Adrenal gland (tissue), 19 donors: ENCODE measurements at regions of chrX and their contacts with region 1.

Region 1: GRCh38 chrX:101617211-101618191 is at the start of gene ARMCX6:
- DNase-seq: peak; percentile 65 to 91 (median 77)
- H3K4me3 ChIP-seq: peak within 1 kb of the TSS in 3 of 4 donors; percentile 11 to 53 (median 37)
- H3K27ac ChIP-seq: peak within 1 kb of the TSS; percentile 7 to 83 (median 60)
- H3K4me1 ChIP-seq: peaks cover 0 to 6% of the 10 kb centered on the region in 2 donors
- H3K27me3 ChIP-seq: no peaks in the 10 kb centered on the region
- CTCF ChIP-seq: peak in 5 of 6 experiments; percentile 13 to 46 (median 40)
- POLR2A ChIP-seq: peak in 1 of 2 donors; percentile 35
- total RNA-seq, gene ARMCX6: 10.1 to 164 (median 48.4) TPM

Region 2: DNA sequence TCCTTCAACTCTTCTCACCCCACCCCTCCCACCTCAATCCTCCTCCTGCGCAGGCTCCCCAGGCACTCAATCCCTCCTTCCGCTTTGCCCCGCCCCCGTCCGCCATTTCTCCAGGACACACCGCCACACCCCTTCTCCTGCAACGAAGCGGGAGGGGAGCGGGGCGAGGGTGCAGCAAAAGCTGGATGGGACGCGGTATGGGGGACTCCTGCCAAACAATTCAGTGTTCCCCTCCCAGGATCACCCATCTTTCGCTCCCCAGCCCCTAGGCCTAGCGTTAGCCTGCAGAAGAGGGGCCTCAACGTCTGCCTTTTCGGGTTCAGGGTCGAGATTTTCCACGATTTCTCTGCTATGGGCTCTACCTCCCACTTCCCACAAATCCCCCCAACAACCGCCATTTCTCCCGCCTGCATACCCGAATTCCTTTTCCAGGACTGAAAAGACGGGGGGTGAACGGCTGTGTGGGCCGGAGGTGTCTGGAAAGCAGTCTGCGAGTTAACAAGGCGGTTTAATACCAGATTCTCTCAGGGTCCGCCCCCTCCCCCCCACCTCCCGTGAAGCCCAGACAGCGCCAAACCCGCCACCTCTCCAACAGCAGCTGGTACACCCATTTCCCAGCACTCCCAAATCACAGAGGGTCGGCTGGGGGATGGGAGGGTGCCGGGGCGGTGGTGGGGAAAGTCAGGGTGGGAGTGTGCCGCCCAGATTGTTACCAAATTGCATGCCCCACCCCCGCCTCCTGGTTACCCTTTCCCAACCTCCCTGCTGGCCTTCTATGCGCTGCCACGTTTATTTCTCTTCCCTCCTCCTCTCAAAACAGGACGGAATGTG is 41.4 kb after region 1 on chrX:
- intact Hi-C with region 1: loop called in 1 of 2 experiments (anchors 5 kb)
- DNase-seq: peak; percentile 66 to 86 (median 75)
- H3K4me3 ChIP-seq: peak overlapping the region in 2 of 4 donors; percentile 49 to 72
- H3K27ac ChIP-seq: peak overlapping the region in 3 of 5 donors; percentile 41 to 84 (median 74)
- H3K4me1 ChIP-seq: no peaks in the 10 kb centered on the region
- H3K27me3 ChIP-seq: peaks cover 5% of the 10 kb centered on the region
- CTCF ChIP-seq: no peak
- POLR2A ChIP-seq: peak in 1 of 2 donors; percentile 28

Region 3: GRCh38 chrX:101759000-101759399 is 141.5 kb after region 1 on chrX:
- intact Hi-C with region 1: no loop called
- DNase-seq: peak; percentile 21 to 75 (median 55)
- H3K4me3 ChIP-seq: no peak overlapping the region
- H3K27ac ChIP-seq: no peak overlapping the region
- H3K4me1 ChIP-seq: no peaks in the 10 kb centered on the region
- H3K27me3 ChIP-seq: no peaks in the 10 kb centered on the region
- CTCF ChIP-seq: peak; percentile 29 to 57 (median 52)
- POLR2A ChIP-seq: no peak